ENCODE measurements at regions of chrX and their contacts with region 1.

Region 1: GRCh38 chrX:105564501-105564900 is 257.8 kb upstream of the NRK start:
- DNase-seq: peak; percentile 27 to 56
- H3K4me3 ChIP-seq: no peak overlapping the region
- H3K27ac ChIP-seq: peak overlapping the region; percentile 29; the same call in 1 of the 2 replicates
- H3K4me1 ChIP-seq: peaks cover 14% of the 10 kb centered on the region
- H3K27me3 ChIP-seq: no peaks in the 10 kb centered on the region
- CTCF ChIP-seq: no peak

Region 2: GRCh38 chrX:105502336-105502735 is 62.2 kb before region 1 on chrX:
- CTCF ChIA-PET with region 1: no interaction called
- POLR2A ChIA-PET with region 1: no interaction called
- intact Hi-C with region 1: no loop called
- DNase-seq: no peak
- H3K4me3 ChIP-seq: no peak overlapping the region
- H3K27ac ChIP-seq: no peak overlapping the region
- H3K4me1 ChIP-seq: peaks cover 9% of the 10 kb centered on the region
- H3K27me3 ChIP-seq: no peaks in the 10 kb centered on the region
- CTCF ChIP-seq: no peak

Region 3: GRCh38 chrX:105695451-105695850 is 130.9 kb after region 1 on chrX:
- CTCF ChIA-PET with region 1: no interaction called
- POLR2A ChIA-PET with region 1: no interaction called
- intact Hi-C with region 1: loop called (anchors 5 kb)
- DNase-seq: peak in 1 of 2 experiments; percentile 84
- H3K4me3 ChIP-seq: no peak overlapping the region
- H3K27ac ChIP-seq: 0 out of 2 replicates have a peak overlapping the region, but pooled peaks have one; percentile 4
- H3K4me1 ChIP-seq: peaks cover 39% of the 10 kb centered on the region
- H3K27me3 ChIP-seq: no peaks in the 10 kb centered on the region
- CTCF ChIP-seq: no peak

Measured in PC-9 (cell line).